Activated CD8-positive, alpha-beta memory T cell treated with anti-CD3 and anti-CD28 coated beads, Interleukin-2, amount 10 ng/mL, durations not matched to agents 7 days and 5 days (primary cell): ENCODE measurements at regions of chr7 and their contacts with region 1.

Region 1: GRCh38 chr7:25125137-25125946 is at the start of gene CYCS:
- DNase-seq: peak; percentile 100
- ATAC-seq: peak; percentile 93
- H3K4me3 Mint-ChIP-seq: peak within 1 kb of the TSS; percentile 96
- H3K27ac Mint-ChIP-seq: peak within 1 kb of the TSS; percentile 96
- H3K4me1 Mint-ChIP-seq: peaks cover 21% of the 10 kb centered on the region
- H3K27me3 Mint-ChIP-seq: no peaks in the 10 kb centered on the region
- total RNA-seq, gene CYCS: 137 to 160 TPM

Region 2: GRCh38 chr7:25098096-25099046 is 27.0 kb before region 1 on chr7:
- CTCF ChIA-PET with region 1: interaction called, 24 read pairs
- DNase-seq: peak; percentile 77
- ATAC-seq: peak; percentile 86
- H3K4me3 Mint-ChIP-seq: no peak overlapping the region
- H3K27ac Mint-ChIP-seq: no peak overlapping the region
- H3K4me1 Mint-ChIP-seq: peaks cover 8% of the 10 kb centered on the region
- H3K27me3 Mint-ChIP-seq: peaks cover 10% of the 10 kb centered on the region